Endothelial cell of umbilical vein (primary cell): ENCODE measurements at regions of chr4 and their contacts with region 1.

Region 1: DNA sequence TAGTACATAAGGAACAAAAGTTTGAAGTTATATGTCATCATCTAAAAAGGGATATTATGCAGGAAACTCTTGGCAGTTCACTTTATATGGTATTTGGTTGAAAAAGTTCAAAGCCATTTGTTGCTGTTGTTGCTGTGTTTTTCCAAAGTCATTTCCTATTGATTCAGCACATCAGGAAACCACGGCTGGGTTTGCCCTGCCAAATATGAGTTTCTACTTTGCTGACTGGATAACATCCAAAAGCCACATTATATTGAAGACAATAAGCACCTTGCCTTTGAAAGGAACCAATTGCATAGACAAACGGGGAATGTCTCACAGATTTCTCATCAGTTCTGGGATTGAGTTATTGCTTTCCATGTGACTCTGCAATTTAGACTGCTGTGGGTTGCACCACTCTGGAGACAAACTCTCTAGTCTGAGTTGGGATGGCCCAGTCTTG is 206.1 kb downstream of the SLC39A8 start:
- DNase-seq: peak; percentile 98
- H3K4me3 ChIP-seq: peak overlapping the region in 1 of 3 experiments; percentile 8
- H3K27ac ChIP-seq: peak overlapping the region; percentile 99
- H3K4me1 ChIP-seq: peaks cover 40% of the 10 kb centered on the region
- H3K27me3 ChIP-seq: no peaks in the 10 kb centered on the region
- CTCF ChIP-seq: no peak
- POLR2A ChIP-seq: peak; percentile 52

Region 2: GRCh38 chr4:101175896-101176676 is 963.1 kb before region 1 on chr4:
- CTCF ChIA-PET with region 1: no interaction called
- POLR2A ChIA-PET with region 1: no interaction called
- dilution Hi-C with region 1: no loop called
- intact Hi-C with region 1: loop called (anchors 1 kb)
- DNase-seq: peak; percentile 68
- H3K4me3 ChIP-seq: no peak overlapping the region
- H3K27ac ChIP-seq: no peak overlapping the region
- H3K4me1 ChIP-seq: peaks cover 23% of the 10 kb centered on the region
- H3K27me3 ChIP-seq: no peaks in the 10 kb centered on the region
- CTCF ChIP-seq: no peak
- POLR2A ChIP-seq: no peak

Region 3: DNA sequence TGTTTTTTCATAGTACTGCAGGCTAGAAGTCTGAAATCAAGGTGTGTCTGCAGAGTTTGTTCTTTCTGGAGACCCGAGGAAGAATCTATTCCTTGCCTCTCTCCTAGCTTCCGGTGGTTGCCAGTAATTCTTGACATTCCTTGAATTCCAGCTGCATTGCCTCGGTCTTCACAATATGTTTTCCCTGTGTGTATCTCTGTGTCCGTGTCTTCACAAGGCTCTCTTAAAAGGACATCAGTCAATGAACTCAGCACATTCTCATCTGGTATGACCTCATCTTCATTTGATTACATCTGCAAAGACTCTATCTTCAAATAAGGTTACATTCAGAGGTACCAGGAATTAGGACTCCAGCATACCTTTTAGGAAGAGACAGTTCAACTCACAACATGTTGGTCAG is 185.2 kb before region 1 on chr4:
- CTCF ChIA-PET with region 1: no interaction called
- POLR2A ChIA-PET with region 1: no interaction called
- dilution Hi-C with region 1: no loop called
- intact Hi-C with region 1: loop called (anchors 1 kb)
- DNase-seq: peak; percentile 25
- H3K4me3 ChIP-seq: no peak overlapping the region
- H3K27ac ChIP-seq: no peak overlapping the region
- H3K4me1 ChIP-seq: peaks cover 6% of the 10 kb centered on the region
- H3K27me3 ChIP-seq: no peaks in the 10 kb centered on the region
- CTCF ChIP-seq: no peak
- POLR2A ChIP-seq: no peak

Region 4: GRCh38 chr4:102174800-102175199 is 35.6 kb after region 1 on chr4:
- CTCF ChIA-PET with region 1: no interaction called
- POLR2A ChIA-PET with region 1: no interaction called
- dilution Hi-C with region 1: no loop called
- intact Hi-C with region 1: loop called (anchors 1 kb)
- DNase-seq: peak; percentile 73
- H3K4me3 ChIP-seq: no peak overlapping the region
- H3K27ac ChIP-seq: peak overlapping the region; percentile 33
- H3K4me1 ChIP-seq: peaks cover 8% of the 10 kb centered on the region
- H3K27me3 ChIP-seq: no peaks in the 10 kb centered on the region
- CTCF ChIP-seq: no peak
- POLR2A ChIP-seq: no peak

Region 5: DNA sequence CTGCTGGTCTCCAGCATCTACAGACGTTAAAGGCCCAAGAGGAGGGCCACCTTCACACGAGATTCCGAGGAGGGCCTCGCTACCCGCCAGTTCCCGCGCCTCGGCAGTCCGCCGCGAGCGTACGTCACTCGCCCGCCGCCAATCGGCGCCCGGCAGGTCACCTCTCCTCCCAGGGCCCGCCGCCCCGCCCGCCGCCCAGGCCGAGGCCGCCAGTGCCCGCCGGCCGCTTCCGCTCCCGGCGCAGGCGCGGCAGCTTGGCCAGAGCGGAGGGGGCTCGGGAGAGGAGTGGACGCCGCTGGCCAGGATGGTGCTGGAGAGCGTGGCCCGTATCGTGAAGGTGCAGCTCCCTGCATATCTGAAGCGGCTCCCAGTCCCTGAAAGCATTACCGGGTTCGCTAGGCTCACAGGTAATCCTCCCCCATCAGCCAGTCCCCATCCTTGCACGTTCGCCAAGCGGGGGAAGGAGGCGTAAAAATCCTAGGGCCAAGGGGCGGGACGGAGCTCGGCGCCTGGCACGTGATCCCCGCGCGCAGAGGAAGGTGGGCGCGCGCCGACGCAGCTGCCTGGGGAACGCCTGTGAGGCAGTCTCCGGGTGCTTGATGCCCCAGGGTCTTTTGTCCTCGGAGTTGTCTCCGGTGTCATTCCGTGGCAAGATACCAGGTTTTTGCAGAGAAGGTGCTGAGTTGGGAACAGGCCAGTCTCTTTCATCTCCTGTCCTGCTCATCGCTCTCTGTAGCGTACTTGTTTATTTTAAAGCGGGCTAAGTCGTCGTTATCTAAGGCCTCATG is 729.8 kb after region 1 on chr4 and contains the start of gene CISD2:
- CTCF ChIA-PET with region 1: no interaction called
- POLR2A ChIA-PET with region 1: no interaction called
- dilution Hi-C with region 1: no loop called
- intact Hi-C with region 1: loop called (anchors 5 kb)
- DNase-seq: peak; percentile 94
- H3K4me3 ChIP-seq: peak within 1 kb of the TSS; percentile 43 to 88 (median 78)
- H3K27ac ChIP-seq: peak within 1 kb of the TSS; percentile 76
- H3K4me1 ChIP-seq: peaks cover 25% of the 10 kb centered on the region
- H3K27me3 ChIP-seq: no peaks in the 10 kb centered on the region
- CTCF ChIP-seq: no peak
- POLR2A ChIP-seq: peak; percentile 91
- total RNA-seq, gene CISD2: 26.5 and 28.4 TPM in 2 replicates